ENCODE measurements at regions of chr1 and their contacts with region 1.

Region 1: DNA sequence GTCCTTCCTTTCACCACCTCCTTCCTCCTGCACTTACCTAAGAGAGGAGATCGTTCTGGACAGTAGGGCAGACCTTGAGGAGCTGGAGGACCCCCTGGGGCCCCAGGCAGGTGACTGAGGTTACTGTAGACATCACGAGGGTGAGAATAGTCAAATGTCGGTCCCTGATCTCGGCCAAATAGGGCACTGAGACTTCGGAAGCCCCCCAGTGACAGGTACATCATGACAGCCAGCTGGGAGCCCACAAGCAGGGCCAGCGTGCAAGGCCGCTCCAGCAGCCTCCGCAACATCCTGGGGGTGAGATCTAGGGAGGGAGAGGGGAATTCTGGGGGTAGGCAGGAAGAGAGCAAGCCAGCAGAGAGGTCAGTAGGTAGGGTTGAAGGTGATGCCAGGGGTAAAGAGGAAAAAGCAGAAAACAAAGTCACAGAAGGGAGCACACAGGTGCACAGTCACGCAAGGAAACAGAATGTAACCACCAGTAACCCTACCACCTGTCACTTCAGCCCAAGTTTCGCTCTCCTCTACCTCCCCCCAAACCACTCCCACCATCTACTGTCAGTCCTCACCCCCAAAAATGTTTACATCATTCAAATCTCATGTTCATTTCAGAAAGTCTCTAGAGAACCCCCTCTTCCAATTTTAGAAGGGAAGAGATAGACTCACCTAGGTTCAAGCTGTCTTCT is 1.4 kb downstream of the B4GALT3 start:
- DNase-seq: peak; percentile 73

Region 2: DNA sequence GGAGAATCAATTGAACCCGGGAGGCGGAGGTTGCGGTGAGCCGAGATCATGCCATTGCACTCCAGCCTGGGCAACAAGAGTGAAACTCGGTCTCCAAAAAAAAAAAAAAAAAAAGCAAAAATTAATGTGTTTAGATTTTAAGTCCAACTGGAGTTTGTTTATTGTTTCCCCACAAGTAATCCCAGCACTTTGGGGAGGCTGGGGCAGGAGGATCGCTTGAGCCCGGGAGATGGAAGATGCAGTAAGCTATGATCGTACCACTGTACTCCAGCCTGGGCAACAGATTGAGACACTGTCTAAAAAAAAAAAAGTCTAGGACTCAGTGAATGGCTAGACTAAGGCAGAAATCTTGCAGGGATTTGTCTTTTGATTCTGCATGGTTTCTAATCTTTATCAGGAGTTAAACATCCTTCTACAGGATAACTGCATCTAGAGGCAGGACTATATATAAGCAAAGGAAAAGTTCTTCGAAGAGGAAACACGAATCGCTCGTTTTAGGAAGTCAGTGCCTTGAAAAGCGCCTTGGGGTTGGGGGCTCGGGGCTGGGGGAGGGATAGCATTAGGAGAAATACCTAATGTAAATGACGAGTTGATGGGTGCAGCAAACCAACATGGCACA is 22.8 kb before region 1 on chr1:
- intact Hi-C with region 1: loop called in 1 of 2 experiments (anchors 1 kb)
- DNase-seq: no peak